Left colon (tissue), 2 donors: ENCODE measurements at regions of chr18 and their contacts with region 1.

Region 1: DNA sequence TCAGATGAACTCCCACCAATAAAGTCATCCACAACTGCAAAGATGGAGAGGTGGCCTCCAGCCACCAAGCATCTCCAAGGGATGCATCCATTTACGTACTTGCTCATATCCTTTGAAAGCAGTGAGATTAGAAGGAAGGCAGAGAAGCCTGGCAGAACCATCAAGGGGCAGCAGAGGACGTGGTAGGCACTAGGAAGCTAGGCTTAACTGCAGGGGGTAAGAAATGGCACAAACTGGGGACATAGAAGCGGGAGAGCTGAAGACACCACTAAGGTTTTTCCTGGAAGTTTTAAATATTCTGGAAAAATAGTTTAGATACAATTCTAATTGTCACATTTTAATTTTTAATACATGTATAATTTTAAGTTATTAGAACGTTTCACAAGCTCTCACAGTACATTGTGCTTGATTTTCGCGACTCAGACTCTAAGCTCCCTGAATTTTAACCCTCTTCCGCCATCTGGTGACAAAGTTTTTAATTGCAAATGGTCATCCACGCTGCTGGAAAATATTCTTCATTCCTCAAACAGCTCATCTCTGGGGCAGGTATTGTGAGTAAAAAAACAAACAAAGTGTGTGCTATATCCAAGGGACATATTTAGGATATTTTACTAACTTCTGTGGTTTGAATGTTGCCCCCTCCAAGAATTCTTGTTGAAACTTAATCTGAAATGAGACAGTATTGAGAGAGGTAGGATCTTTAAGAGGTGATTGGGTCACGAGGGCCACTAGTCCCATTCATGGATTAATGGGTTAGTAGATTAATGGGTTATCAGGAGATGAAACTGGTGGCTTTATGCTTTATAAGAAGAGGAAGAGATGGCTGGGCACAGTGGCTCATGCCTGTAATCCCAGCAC is 1.6 kb upstream of the PSTPIP2 start:
- DNase-seq: peak in 1 of 2 donors; percentile 14
- ATAC-seq: peak; percentile 51

Region 2: DNA sequence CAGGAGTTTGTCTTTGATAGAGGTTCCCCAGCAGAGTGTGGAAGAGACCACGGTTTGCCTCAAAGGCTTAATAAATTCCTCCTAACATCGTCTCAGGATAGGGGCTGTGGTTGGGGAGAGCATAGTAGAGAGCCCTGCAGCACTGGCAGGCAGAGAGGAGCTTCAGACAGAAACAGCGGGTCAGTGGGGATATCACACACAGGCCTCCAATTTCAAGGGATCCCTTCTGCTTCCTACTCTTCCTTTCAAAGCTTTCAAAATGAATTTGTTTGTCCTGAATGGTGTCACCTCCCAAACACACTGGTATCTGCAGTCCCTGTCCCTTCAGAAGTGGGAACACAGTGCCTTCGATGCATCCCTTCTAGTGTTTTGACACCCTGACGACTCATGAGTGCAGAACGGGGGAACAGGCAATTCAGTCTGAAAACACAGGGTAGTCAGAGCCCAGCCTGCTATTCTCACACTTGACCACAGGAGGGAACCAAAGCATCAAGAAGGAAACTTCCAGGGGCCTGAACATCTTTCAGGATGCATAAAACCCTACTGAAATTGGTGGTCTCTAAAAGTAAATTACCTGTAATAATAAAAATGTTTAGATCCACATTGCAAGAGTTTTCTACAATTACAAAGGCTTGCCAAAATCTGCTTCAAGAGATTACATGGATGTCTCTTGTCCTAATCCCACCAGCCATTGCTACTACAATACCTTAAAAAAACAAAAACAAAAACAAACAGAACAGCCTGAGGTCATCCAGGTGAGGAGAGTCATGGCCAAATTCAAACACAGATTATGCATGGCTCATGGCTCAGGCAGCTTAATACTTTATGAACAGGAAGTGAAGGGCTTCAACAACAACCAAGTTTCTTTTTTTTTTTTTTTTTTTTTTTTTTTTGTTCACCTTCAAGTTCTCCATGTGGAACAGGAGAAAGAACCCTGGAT is 408.6 kb before region 1 on chr18:
- intact Hi-C with region 1: loop called in 1 of 2 experiments (anchors 10 kb)
- DNase-seq: peak; percentile 32 to 49
- ATAC-seq: peak; percentile 69

Region 3: DNA sequence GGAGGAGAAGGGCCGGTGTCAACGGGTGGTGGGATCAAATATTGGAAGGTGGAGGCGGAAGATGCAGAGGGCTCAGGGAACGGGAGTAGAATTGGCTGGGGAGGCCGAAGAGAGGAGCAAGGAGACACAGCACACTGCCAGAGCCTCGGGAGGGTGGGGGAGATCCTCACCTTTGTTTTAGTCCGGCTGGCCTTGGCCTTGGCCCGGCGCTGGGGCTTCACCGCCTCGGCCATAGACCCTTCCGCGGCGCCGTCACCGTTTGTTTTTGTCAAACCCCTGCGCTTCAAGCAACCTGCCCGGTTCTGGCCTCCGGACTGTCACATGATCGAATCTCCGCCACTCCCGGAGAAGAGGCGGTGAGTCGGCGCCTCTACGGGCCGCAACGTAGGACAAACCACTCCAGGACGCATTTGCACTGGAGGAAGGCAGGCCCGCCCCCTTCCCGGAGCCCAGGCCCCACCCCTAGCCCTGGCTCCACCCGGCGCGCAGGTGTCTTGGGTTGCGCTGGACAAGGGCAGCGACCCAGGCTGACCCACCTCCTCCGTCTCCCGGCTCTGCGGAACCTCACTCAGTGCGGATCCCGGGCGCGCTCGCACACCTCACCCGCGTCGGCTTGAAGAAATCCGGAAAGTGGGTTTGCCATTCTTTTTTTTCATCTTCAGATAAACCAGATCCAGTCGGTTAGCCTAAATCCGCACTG is 106.5 kb before region 1 on chr18 and contains the start of gene EPG5:
- intact Hi-C with region 1: loop called in 1 of 2 experiments (anchors 10 kb)
- DNase-seq: peak; percentile 97 to 98
- ATAC-seq: peak; percentile 99
- total RNA-seq, gene EPG5: 18.0 to 21.5 TPM

Region 4: GRCh38 chr18:46130061-46130460 is 56.4 kb after region 1 on chr18:
- intact Hi-C with region 1: no loop called
- DNase-seq: no peak
- ATAC-seq: no peak